Motor neuron (in vitro differentiated cells): ENCODE measurements at regions of chr17 and their contacts with region 1.

Region 1: GRCh38 chr17:35969558-35970380 is 11.5 kb downstream of the CCL16 start:
- ATAC-seq: peak; percentile 63 to 91 (median 81)
- H3K4me3 ChIP-seq: no peak overlapping the region
- H3K27ac ChIP-seq: no peak overlapping the region
- H3K4me1 ChIP-seq: no peaks in the 10 kb centered on the region

Region 2: DNA sequence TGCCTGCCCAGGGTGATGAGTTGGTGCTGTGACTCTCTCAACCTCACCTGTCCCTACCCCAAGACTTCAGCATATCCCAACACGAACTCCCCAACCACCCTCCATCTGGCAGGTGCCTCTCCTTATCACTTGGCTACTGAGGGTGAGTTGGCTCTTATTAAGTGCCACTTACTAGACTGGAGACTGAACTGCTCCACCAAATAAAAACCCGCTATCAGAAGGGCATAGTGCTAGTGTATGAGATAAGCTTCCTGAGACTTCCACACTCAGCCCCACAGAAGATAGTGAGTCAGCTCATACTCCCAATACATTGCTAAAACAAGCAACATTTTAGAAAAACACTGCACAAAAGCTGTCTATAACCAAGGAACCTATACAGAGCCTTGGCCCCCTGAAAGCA is 78.3 kb after region 1 on chr17:
- in situ Hi-C with region 1: no loop called
- ATAC-seq: no peak
- H3K4me3 ChIP-seq: no peak overlapping the region
- H3K27ac ChIP-seq: no peak overlapping the region
- H3K4me1 ChIP-seq: no peaks in the 10 kb centered on the region

Region 3: GRCh38 chr17:36133602-36134236 is 163.9 kb after region 1 on chr17:
- in situ Hi-C with region 1: loop called in 2 of 9 experiments (anchors 10 to 25 kb)
- ATAC-seq: peak in 4 of 8 experiments; percentile 31 to 74 (median 50)
- H3K4me3 ChIP-seq: no peak overlapping the region
- H3K27ac ChIP-seq: no peak overlapping the region
- H3K4me1 ChIP-seq: peaks cover 0 to 3% of the 10 kb centered on the region in 2 donors

Region 4: DNA sequence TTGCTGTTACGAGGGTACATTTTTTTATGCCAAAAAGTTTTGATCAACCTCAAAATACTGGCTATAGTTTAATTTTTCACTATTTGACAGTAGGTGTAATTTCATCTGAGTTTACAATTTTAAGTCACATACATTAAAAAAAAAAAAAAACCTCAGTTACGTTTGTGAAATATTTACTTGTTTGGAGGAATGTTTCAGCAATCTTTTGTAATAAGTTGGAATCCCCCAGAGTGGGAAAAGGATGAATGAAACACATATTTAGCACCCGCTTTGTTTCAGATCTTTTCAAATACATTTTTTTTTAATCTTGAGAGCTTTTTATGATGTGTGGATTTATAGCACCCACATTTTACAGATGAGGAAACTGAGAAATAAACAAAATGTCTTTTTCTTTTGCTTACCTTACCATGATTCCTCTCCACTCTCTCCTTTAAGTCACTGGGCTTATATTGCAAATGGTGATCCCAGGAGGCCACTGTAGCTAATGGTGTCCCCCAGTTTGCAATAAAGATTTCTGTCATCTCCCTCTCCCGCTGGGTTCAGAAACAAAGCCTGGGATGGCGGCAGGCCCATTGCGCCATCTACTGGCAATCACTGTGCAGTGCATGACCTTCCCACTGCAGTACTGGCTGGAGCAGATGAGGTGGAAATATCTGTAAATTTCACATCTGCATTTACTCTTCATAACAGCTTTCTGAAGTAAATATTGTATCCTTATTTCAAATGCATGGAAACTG is 179.0 kb after region 1 on chr17:
- in situ Hi-C with region 1: loop called in 5 of 9 experiments (anchors 10 to 25 kb)
- ATAC-seq: peak; percentile 76 to 98 (median 94)
- H3K4me3 ChIP-seq: no peak overlapping the region
- H3K27ac ChIP-seq: no peak overlapping the region
- H3K4me1 ChIP-seq: no peaks in the 10 kb centered on the region

Region 5: GRCh38 chr17:36486204-36487194 is 516.7 kb after region 1 on chr17 and contains the start of gene ZNHIT3:
- in situ Hi-C with region 1: loop called in 4 of 9 experiments (anchors 25 kb)
- ATAC-seq: peak; percentile 86 to 92 (median 88)
- H3K4me3 ChIP-seq: peak within 1 kb of the TSS; percentile 62 to 78 (median 69)
- H3K27ac ChIP-seq: peak within 1 kb of the TSS; percentile 75 to 82
- H3K4me1 ChIP-seq: peaks cover 11 to 18% of the 10 kb centered on the region in 2 donors
- total RNA-seq, gene ZNHIT3: 40.8 to 83.4 (median 64.4) TPM

Region 6: GRCh38 chr17:36837195-36837938 is 867.6 kb after region 1 on chr17:
- in situ Hi-C with region 1: no loop called
- ATAC-seq: peak in 3 of 8 experiments; percentile 26 to 56 (median 27)
- H3K4me3 ChIP-seq: no peak overlapping the region
- H3K27ac ChIP-seq: no peak overlapping the region
- H3K4me1 ChIP-seq: peaks cover 6 to 13% of the 10 kb centered on the region in 2 donors